Activated B cell treated with CpG ODN at 0.5 μM for 24 hours (primary cell): ENCODE measurements at regions of chr20 and their contacts with region 1.

Region 1: DNA sequence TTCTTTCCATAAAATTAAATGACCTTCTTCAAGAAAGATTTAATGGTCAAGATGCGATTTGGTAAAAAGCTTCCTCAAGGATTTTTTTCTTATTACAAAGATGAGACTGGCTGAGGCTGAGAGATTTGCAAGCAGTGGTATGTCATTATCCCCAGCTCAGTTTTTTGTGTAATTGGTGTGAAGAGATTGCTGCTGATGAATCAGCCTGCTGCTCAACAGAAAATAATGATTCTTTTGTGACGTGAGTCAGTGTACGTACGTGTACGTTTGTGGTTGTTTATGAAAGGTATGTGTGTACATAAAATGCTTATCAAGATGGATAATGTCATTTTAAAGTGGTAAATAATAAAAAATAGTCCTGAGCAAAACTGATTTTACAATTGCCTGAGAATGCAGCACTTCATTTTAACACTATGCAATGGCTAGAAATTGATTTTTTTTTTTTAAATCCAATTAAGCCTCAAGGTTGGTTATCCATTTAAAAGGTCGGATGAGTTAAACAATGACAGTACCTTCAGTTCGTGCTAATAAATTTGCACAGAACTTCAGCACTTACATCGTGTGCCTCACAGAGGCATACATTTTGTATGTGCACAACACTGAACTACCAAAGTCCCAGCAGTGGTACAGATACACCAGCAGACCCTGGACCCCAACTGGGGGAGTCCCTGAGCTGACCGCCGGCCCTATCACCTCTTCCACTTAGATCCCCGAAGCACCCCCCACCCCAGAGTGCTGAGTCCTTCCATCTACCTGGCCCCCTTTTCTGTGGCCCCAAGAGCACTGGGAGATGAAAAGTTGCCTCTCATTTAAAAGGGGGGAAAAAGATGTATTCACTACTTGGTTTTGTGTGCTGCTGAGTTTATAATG is 9.7 kb upstream of the NPEPL1 start:
- DNase-seq: no peak
- ATAC-seq: no peak
- H3K4me3 Mint-ChIP-seq: no peak overlapping the region
- H3K27ac Mint-ChIP-seq: no peak overlapping the region
- H3K4me1 Mint-ChIP-seq: no peaks in the 10 kb centered on the region
- H3K27me3 Mint-ChIP-seq: no peaks in the 10 kb centered on the region
- CTCF ChIP-seq: no peak

Region 2: DNA sequence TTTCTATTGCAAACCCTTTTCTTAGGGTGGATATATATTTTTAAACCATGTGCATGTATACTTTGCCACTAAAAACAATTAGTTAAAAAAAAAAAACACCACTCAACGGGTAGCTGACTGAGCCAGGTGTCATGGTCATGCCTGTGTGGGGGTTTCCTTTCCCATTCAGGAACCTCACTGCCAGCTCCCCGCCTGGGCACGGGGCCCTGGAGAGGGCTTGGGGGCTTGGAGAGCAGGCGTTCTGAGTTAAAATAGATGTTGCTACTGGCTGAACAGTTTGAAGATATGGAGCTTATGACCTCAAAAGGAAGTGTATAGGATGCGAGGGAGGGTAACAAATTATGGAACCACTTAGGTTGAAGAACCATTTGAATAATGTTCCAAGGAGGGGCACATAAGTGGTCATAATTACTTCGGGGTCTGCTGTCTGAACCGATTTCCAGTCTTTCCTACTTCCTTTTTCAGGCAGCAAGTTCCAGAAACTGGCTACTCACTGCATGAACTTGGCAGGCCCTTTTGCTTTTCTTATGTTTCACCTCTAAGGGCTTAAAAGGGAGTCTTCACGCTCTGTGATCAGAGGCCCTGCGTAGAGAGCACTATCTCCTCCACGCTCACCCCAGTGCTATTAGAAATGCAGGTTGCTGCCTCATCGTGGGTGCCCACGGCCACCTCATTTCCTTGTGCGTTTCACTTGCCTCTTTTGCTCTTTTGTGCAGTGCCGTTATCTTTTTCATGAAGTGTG is 21.9 kb before region 1 on chr20:
- CTCF ChIA-PET with region 1: no interaction called
- POLR2A ChIA-PET with region 1: interaction called, 11 read pairs
- intact Hi-C with region 1: no loop called
- DNase-seq: no peak
- ATAC-seq: no peak
- H3K4me3 Mint-ChIP-seq: no peak overlapping the region
- H3K27ac Mint-ChIP-seq: no peak overlapping the region
- H3K4me1 Mint-ChIP-seq: peaks cover 23% of the 10 kb centered on the region
- H3K27me3 Mint-ChIP-seq: no peaks in the 10 kb centered on the region
- CTCF ChIP-seq: no peak

Region 3: DNA sequence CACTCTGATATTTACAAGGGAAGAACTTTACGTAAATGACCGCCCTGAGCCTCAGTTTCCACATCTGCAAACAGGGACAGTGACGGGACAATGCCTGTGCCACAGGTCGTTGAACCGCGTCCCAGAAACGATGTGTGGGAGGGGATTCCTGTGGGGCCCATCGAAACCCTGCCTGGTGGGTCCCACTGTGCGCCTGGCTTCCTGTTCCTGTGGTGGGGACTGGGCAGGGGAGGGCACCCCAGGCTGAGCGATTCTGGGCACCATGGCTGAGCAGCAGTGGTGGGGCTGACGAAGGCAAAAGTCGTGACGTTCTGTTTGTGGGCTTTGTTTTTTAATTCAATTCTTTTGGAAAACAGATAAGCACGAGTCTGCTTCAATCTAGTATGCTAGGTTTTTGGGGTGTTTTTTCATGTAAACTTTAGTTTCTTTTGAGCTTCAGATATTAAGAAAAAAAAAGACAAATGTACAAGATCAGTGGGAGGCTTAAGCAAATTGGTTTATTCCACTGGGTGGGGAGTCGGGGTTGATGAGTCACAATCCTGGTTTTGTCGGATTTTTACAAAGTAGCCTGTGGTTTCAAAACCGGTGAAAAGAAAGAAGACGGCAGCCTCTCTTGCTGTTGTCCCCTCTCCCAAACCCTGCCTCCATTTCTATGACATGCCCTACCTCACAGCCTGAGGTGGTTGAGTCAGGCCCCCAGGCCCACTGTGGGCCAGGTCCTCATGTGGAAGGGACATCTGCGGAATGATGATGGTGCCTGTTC is 127.4 kb after region 1 on chr20:
- CTCF ChIA-PET with region 1: no interaction called
- POLR2A ChIA-PET with region 1: no interaction called
- intact Hi-C with region 1: no loop called
- DNase-seq: no peak
- ATAC-seq: no peak
- H3K4me3 Mint-ChIP-seq: no peak overlapping the region
- H3K27ac Mint-ChIP-seq: no peak overlapping the region
- H3K4me1 Mint-ChIP-seq: no peaks in the 10 kb centered on the region
- H3K27me3 Mint-ChIP-seq: peaks cover 16% of the 10 kb centered on the region
- CTCF ChIP-seq: no peak